OCI-LY7 (cell line): ENCODE measurements at regions of chr15 and their contacts with region 1.

Region 1: DNA sequence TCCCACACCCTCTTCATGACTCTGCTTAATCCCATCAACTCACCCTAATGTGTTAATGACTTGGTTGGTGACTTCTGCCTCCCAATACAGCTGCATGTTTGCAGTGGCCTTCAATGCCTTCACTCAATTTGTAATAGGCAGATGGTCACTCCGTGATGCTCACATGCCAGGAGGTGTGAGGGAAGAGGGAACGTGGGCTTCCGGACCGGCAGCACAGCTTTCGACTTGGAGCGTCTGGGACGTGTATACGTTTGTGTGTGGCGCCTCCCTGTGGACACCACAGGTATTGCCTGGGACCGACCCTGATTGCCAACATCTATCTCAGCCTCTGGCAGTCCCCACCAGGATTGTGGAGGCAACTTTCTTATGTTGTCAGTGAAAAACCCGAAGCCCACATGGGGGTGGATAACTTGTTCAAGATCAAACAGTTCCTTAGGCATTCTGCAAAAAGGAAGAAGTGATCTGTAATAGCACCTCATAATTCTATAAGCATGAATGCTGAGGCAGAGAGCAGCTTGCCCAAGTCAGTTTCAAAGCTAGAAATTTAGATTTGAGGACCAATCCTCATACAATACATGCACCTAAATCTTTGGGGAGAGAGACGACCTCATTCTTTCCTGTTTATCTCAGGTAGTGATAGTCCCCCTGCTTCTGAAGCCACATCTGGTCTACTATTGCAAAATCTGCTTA is 16.9 kb downstream of the MRPL46 start:
- DNase-seq: peak; percentile 85
- H3K4me3 ChIP-seq: no peak overlapping the region
- H3K27ac ChIP-seq: no peak overlapping the region
- H3K4me1 ChIP-seq: peaks cover 8% of the 10 kb centered on the region
- CTCF ChIP-seq: peak; percentile 97

Region 2: GRCh38 chr15:87863152-87863551 is 587.1 kb before region 1 on chr15:
- CTCF ChIA-PET with region 1: no interaction called
- POLR2A ChIA-PET with region 1: no interaction called
- intact Hi-C with region 1: no loop called
- DNase-seq: no peak
- H3K4me3 ChIP-seq: no peak overlapping the region
- H3K27ac ChIP-seq: no peak overlapping the region
- H3K4me1 ChIP-seq: no peaks in the 10 kb centered on the region
- CTCF ChIP-seq: no peak

Region 3: GRCh38 chr15:87896936-87897335 is 553.3 kb before region 1 on chr15:
- CTCF ChIA-PET with region 1: no interaction called
- POLR2A ChIA-PET with region 1: no interaction called
- intact Hi-C with region 1: no loop called
- DNase-seq: no peak
- H3K4me3 ChIP-seq: no peak overlapping the region
- H3K27ac ChIP-seq: no peak overlapping the region
- H3K4me1 ChIP-seq: no peaks in the 10 kb centered on the region
- CTCF ChIP-seq: no peak

Region 4: DNA sequence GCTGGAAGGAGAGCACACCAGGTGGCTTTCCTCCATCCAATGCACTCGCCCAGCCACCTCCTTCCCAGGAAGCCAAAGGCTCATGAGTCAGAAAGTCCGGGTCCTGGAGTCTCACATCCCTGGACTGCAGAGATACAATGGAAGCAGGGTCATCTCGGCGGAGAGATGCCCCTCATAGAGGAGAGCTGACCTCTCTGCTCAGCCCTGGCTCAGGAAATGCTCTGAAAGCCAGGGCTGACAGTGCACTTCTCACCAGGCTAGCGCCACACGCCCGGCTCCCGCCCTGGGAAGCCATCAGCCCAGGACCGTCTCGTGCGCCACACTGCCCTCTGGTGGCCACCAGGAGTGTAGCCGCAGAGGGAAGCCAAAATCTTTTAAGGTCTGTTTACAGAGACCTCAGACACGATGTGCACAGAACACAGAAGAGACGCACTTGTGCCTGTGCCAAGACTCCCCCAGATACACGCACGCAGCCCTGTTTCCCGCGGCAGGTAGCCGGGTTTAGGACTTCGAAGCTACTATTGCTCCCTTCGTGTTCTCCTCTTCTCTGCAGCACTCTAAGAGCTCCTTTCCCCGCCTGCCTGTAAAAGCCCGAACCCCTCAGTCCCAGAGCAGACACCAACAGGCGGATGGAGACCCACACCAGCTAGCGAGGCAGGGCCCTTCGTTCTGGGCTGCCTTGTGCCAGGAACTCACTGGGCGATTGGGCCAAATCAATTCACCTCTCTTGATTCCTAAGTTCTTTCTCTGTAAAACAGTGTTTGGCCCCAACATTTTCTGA is 203.4 kb before region 1 on chr15:
- CTCF ChIA-PET with region 1: interaction called, 26 read pairs
- POLR2A ChIA-PET with region 1: interaction called, 8 read pairs
- intact Hi-C with region 1: loop called (anchors 1 kb)
- DNase-seq: peak; percentile 79
- H3K4me3 ChIP-seq: no peak overlapping the region
- H3K27ac ChIP-seq: no peak overlapping the region
- H3K4me1 ChIP-seq: peaks cover 13% of the 10 kb centered on the region
- CTCF ChIP-seq: peak; percentile 90

Region 5: GRCh38 chr15:88274553-88275460 is 175.4 kb before region 1 on chr15:
- CTCF ChIA-PET with region 1: no interaction called
- POLR2A ChIA-PET with region 1: no interaction called
- intact Hi-C with region 1: loop called (anchors 1 kb)
- DNase-seq: peak; percentile 68
- H3K4me3 ChIP-seq: no peak overlapping the region
- H3K27ac ChIP-seq: no peak overlapping the region
- H3K4me1 ChIP-seq: no peaks in the 10 kb centered on the region
- CTCF ChIP-seq: peak; percentile 89

Region 6: GRCh38 chr15:88321269-88321668 is 129.0 kb before region 1 on chr15:
- CTCF ChIA-PET with region 1: no interaction called
- POLR2A ChIA-PET with region 1: no interaction called
- intact Hi-C with region 1: loop called (anchors 2 kb)
- DNase-seq: peak; percentile 45
- H3K4me3 ChIP-seq: no peak overlapping the region
- H3K27ac ChIP-seq: no peak overlapping the region
- H3K4me1 ChIP-seq: no peaks in the 10 kb centered on the region
- CTCF ChIP-seq: peak; percentile 42; the same call in 1 of the 2 replicates